ENCODE measurements at regions of chr6 and their contacts with region 1.

Region 1: DNA sequence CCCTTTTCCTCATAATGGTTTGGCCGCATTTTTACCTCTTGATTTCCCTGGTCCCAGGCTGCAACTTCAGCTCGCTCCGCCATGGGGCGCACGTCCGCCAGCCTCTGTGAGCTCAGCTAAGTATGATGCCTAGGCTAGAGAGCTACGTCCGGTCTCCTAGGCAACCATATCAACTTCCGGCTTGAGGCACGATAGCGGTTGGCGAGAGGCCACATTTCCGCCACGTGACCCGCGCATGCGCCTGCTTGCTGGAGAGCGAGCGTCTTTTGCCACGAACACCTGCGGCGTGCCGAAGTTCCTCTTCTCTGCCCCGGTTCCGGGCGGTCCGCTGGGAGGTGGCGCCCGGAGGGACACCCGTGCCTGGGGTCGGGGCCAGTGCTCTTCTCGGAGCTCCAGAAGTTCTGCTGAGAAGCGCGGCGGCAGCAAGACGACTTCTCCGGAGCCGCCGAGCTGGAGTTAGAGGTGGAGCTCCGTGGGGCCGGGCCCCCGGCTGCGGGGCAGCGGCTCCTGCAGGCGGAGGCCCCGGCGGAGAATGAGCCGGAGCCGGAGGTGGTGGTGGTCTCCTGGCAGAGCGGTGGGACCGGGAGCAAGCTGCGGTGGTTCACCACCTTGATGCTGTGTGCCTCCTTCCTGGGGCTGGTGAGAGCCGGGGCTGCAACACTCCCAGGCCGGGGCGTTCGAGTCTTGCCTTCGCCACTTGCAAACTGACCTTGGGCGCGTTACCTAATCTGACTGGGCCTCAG is 172.0 kb downstream of the SLC16A10 start:
- DNase-seq: peak; percentile 99
- H3K4me3 ChIP-seq: peak overlapping the region; percentile 55 to 63
- H3K27ac ChIP-seq: peak overlapping the region; percentile 68 to 79
- H3K4me1 ChIP-seq: peaks cover 5% of the 10 kb centered on the region
- H3K27me3 ChIP-seq: no peaks in the 10 kb centered on the region
- CTCF ChIP-seq: peak; percentile 93 to 100 (median 98)
- POLR2A ChIP-seq: peak; percentile 58

Region 2: GRCh38 chr6:110781522-110782214 is 477.6 kb before region 1 on chr6:
- intact Hi-C with region 1: no loop called
- DNase-seq: no peak
- H3K4me3 ChIP-seq: no peak overlapping the region
- H3K27ac ChIP-seq: no peak overlapping the region
- H3K4me1 ChIP-seq: peaks cover 4% of the 10 kb centered on the region
- H3K27me3 ChIP-seq: no peaks in the 10 kb centered on the region
- CTCF ChIP-seq: no peak
- POLR2A ChIP-seq: no peak

Region 3: DNA sequence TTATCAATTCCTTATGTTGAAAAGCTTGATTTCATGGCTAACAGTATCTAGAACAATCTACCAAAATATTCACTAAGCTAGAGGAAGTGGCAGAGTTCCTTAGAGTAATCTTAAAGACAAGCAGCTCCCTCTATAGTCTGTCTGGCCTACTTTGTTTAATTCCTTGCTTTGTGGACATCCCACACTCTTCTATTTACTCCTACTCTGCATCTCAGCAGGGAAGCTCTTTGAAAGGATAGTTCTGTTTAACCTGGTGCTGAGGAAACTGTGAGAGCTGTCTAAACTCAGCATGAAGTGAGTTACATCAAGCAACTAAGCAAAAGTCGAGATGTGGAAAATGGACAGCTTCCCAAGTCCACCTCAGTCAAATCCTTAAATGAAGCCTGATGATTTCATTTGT is 219.5 kb after region 1 on chr6:
- intact Hi-C with region 1: loop called (anchors 5 kb)
- DNase-seq: no peak
- H3K4me3 ChIP-seq: no peak overlapping the region
- H3K27ac ChIP-seq: peak overlapping the region; percentile 0 to 32
- H3K4me1 ChIP-seq: no peaks in the 10 kb centered on the region
- H3K27me3 ChIP-seq: no peaks in the 10 kb centered on the region
- CTCF ChIP-seq: peak in 3 of 4 experiments; percentile 34 to 61 (median 51)
- POLR2A ChIP-seq: no peak

Region 4: DNA sequence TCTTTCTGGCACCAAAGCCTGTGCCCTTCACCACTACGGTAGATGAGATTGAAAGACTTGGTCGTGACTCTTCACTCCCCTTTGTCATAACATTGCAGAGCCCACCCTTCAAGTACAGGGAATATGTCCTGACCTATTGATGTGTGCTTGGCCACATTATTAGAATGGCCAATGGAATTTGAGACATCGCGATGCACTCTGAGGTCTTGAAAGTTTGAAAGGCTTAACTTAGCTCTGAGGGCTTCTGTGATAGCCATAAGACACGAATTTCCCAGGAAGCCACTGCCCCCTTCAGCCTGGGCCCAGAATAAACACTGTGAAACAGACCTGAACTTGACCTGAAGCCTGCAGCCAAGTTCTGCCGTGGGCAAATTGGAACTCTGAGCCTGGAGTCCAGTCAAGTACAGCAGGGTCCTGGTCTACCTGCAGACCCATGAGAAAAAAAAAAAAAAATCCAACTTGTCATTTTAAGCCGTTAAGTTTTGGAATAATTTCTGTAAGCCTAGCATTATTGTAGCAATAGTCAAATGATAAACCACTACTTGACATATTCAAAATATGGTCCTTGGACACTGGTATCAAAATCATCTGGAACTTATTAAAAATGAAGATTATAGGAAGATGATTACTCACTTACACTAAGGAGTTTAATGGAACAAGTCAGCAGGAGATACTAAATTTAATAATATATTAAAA is 383.4 kb after region 1 on chr6:
- intact Hi-C with region 1: loop called (anchors 5 kb)
- DNase-seq: no peak
- H3K4me3 ChIP-seq: no peak overlapping the region
- H3K27ac ChIP-seq: no peak overlapping the region
- H3K4me1 ChIP-seq: no peaks in the 10 kb centered on the region
- H3K27me3 ChIP-seq: no peaks in the 10 kb centered on the region
- CTCF ChIP-seq: peak in 2 of 4 experiments; percentile 55
- POLR2A ChIP-seq: no peak

Region 5: GRCh38 chr6:111997078-111997852 is 738.0 kb after region 1 on chr6:
- intact Hi-C with region 1: loop called (anchors 5 kb)
- DNase-seq: peak; percentile 75
- H3K4me3 ChIP-seq: no peak overlapping the region
- H3K27ac ChIP-seq: no peak overlapping the region
- H3K4me1 ChIP-seq: no peaks in the 10 kb centered on the region
- H3K27me3 ChIP-seq: no peaks in the 10 kb centered on the region
- CTCF ChIP-seq: peak; percentile 85 to 93 (median 92)
- POLR2A ChIP-seq: no peak

Region 6: GRCh38 chr6:112043032-112044007 is 784.1 kb after region 1 on chr6:
- intact Hi-C with region 1: loop called (anchors 10 kb)
- DNase-seq: peak; percentile 73
- H3K4me3 ChIP-seq: peak overlapping the region; percentile 40 to 46
- H3K27ac ChIP-seq: peak overlapping the region; percentile 73 to 75
- H3K4me1 ChIP-seq: no peaks in the 10 kb centered on the region
- H3K27me3 ChIP-seq: no peaks in the 10 kb centered on the region
- CTCF ChIP-seq: peak; percentile 78 to 94 (median 85)
- POLR2A ChIP-seq: no peak

Measured in prostate gland (tissue), 2 donors.